A673 (cell line): ENCODE measurements at regions of chr19 and their contacts with region 1.

Region 1: GRCh38 chr19:47483800-47484690 is at the start of gene KPTN:
- DNase-seq: peak; percentile 95
- H3K4me3 ChIP-seq: peak within 1 kb of the TSS; percentile 74
- H3K27ac ChIP-seq: peak within 1 kb of the TSS; percentile 98
- H3K4me1 ChIP-seq: peaks cover 6% of the 10 kb centered on the region
- H3K27me3 ChIP-seq: no peaks in the 10 kb centered on the region
- CTCF ChIP-seq: peak; percentile 98
- total RNA-seq, gene KPTN: 18.7 and 18.9 TPM in 2 replicates

Region 2: GRCh38 chr19:46924874-46925547 is 559.0 kb before region 1 on chr19:
- CTCF ChIA-PET with region 1: no interaction called
- POLR2A ChIA-PET with region 1: no interaction called
- intact Hi-C with region 1: no loop called
- DNase-seq: no peak
- H3K4me3 ChIP-seq: no peak overlapping the region
- H3K27ac ChIP-seq: peak overlapping the region; percentile 9
- H3K4me1 ChIP-seq: peaks cover 56% of the 10 kb centered on the region
- H3K27me3 ChIP-seq: no peaks in the 10 kb centered on the region
- CTCF ChIP-seq: no peak

Region 3: DNA sequence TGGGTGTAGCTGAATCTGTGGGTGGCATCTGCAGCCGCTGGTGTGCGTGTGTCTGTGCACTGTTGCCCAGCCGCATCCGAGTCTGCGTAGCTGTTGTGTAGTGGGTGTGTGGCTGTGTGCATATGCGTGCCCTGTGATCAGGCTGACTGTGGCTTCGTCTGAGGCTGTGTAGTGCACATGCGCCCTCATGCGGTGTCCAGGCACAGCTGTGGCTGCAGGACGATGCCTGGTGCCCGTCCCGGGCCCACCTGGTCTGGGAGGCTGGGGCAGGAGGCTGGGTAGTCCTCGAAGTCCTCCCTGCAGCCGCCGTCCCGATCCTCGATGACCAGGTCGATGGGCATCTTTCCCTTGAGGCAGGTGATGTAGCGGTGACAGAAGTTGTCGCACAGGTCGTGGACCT is 69.6 kb before region 1 on chr19:
- CTCF ChIA-PET with region 1: no interaction called
- POLR2A ChIA-PET with region 1: no interaction called
- intact Hi-C with region 1: no loop called
- DNase-seq: peak; percentile 23
- H3K4me3 ChIP-seq: no peak overlapping the region
- H3K27ac ChIP-seq: no peak overlapping the region
- H3K4me1 ChIP-seq: peaks cover 6% of the 10 kb centered on the region
- H3K27me3 ChIP-seq: no peaks in the 10 kb centered on the region
- CTCF ChIP-seq: no peak; the same call in 1 of the 2 replicates

Region 4: DNA sequence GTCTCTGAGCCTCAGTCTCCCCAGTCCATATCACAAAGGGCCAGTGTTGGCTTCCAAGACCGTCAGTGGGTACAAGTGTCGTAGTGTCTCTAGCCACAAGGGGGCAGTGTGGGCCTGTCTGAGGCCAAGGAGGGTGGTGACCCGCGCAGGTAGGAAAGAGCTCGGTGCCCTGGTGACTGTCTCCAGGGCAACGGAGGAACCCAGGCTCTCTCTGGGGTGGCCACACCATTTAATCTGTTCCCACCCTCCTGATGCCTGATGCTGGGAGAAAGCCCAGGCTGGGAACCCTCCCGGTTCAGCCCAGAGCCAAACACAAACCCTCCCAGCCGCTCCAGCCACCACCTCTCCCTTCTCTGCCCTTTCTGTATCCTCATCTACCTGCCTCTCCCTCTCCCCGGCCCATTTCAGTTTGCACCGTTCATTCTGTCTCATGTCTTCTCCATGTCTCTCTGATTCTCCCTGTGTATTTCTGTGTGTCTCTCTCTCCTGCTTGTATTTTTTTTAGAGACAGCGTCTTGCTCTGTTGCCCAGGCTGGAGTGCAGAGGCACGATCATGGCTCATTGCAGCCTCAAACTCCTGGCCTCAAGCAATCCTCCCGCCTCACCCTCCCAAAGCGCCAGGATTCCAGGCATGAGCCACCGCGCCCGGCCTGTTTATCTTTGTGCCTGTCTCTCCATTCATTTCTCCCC is 47.2 kb before region 1 on chr19:
- CTCF ChIA-PET with region 1: interaction called, 10 read pairs
- POLR2A ChIA-PET with region 1: no interaction called
- intact Hi-C with region 1: no loop called
- DNase-seq: peak; percentile 78
- H3K4me3 ChIP-seq: no peak overlapping the region
- H3K27ac ChIP-seq: no peak overlapping the region
- H3K4me1 ChIP-seq: no peaks in the 10 kb centered on the region
- H3K27me3 ChIP-seq: no peaks in the 10 kb centered on the region
- CTCF ChIP-seq: peak; percentile 90